ENCODE measurements at regions of chr1 and their contacts with region 1.

Region 1: DNA sequence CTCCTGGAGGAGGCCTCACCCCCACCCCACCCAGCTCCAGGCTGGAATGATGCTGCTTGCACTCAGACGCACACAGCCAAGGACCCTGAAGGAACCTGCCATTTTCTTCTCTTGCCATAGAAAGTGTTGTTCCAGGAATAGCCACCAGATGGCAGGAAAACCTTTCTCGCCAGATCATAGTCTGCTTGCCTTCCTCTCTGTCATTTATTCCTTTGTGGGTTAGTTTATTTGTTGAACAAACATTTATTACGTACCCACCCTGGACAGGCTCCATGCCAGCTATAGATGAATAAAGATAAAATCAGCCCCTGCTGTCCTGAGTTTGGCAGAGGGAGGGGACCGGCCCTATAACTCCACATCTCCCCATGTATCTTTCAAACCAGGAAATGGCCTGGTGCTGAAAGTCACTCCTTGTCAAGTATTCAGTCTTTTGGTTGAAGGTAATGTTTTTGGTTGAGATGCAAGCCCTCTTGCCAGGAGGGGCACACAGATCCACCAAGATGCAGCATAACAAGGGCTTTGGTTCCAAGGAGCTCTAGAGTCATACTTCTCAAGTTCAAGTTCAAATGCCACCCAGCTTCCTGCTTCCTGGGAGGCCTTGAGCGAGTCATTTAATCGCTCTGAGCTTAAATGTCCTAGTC is 7.0 kb upstream of the KCNC4 start:
- DNase-seq: no peak
- H3K4me3 ChIP-seq: no peak overlapping the region
- CTCF ChIP-seq: peak; percentile 76

Region 2: GRCh38 chr1:110188035-110188618 is 15.0 kb before region 1 on chr1:
- CTCF ChIA-PET with region 1: interaction called, 74 read pairs
- POLR2A ChIA-PET with region 1: no interaction called
- DNase-seq: no peak
- H3K4me3 ChIP-seq: no peak overlapping the region
- CTCF ChIP-seq: no peak

Region 3: GRCh38 chr1:110292031-110292741 is 89.0 kb after region 1 on chr1:
- CTCF ChIA-PET with region 1: interaction called, 828 read pairs
- POLR2A ChIA-PET with region 1: no interaction called
- DNase-seq: no peak
- H3K4me3 ChIP-seq: no peak overlapping the region
- CTCF ChIP-seq: no peak

Region 4: GRCh38 chr1:110338886-110339406 is 135.8 kb after region 1 on chr1 and contains the start of gene RBM15:
- CTCF ChIA-PET with region 1: interaction called, 150 read pairs
- POLR2A ChIA-PET with region 1: interaction called, 3 read pairs
- DNase-seq: peak; percentile 100
- H3K4me3 ChIP-seq: peak within 1 kb of the TSS; percentile 98
- CTCF ChIP-seq: no peak

Region 5: DNA sequence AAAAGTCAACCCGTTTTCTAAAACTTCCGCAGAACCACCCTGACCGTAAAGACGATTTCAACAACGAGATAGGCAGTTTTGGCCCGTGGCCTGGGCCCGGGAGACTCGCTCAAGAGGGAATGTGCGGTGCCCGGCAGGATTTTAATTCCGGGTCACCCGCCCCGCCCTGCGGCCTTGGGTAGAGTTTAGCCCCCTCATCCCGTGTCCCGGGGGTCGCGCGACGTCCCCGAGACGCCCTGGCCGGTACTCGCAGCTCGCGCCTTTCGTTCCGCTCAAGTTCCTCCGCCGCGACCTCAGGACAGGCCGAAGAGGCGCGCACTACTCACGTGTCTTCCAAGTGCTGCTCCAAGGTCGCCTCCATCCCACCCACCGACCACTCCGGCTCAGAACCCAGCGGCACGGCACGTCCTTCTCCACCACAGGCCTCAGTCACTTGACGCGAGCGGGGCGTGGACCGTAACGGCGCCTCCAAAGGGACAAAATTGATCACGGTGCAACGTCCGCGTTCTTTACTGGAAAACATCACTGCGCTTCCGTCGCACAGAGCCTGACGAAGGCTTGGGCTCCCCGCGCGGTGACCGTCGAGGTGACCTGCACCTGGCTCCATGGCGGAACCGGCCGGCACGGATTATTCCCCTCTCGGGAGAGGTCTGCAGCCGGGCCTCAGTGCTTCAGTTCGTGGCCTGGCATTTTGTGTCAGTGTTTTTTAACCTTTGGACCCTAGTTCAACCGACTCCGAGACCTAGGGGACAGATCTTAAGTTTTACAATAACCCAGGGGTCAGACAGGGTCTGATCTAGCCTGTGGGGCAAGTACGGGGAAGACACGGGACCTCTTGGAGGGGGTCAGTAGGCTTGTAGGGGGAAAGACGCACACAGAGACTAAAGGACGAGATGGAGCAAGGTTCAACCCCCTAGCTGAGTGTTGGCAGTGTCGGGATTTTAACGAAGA is 204.4 kb after region 1 on chr1 and contains the start of gene LAMTOR5:
- CTCF ChIA-PET with region 1: interaction called, 41 read pairs
- POLR2A ChIA-PET with region 1: no interaction called
- DNase-seq: peak; percentile 55
- H3K4me3 ChIP-seq: peak within 1 kb of the TSS; percentile 98
- CTCF ChIP-seq: no peak

Measured in AG04449 (cell line).